ENCODE measurements at regions of chr5 and their contacts with region 1.

Region 1: DNA sequence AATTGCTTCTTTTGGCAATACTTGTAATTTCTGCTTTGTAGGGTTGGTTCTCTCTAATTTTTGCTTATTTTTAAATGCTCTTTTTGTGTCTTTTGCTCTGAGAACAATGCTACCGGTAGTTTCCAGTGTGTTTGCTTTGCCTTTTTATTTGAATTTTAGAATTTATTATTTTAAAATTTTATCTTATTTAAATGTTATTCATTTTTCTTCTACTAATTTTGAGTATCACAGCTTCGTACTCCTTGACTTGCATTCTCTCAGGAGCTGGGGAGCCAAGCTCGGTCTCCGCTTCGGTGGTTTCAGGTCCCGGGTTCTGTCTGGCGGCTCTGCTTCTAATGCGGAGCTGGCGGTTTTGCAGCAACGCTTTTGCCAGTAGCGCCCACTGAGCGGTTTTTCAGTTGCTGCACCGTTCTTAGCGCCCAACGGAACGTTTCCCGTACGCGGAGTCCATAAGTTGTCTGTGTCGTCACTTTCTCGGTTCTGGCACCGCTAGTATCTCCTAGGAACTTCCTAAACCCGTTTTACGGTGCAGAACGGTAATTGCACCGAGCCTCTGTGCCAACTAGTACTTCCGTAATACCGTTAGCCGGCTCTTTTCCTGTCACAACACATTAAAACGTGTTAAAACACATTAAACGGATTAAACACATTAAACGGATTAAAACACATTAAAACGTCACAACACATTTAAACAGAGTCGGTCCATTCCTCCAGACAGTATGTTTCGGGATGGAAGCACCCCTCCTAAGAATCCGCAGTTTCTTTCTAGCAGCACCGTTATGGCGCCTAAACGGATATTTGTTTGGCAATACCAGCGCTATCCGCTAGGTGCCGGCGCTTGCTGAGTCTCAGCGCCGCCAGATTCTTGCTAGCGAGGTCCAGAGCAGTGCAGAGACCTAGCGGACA is 45.6 kb downstream of the ANXA2R start:
- DNase-seq: peak; percentile 94
- H3K4me3 Mint-ChIP-seq: peak overlapping the region; percentile 99
- H3K27ac Mint-ChIP-seq: peak overlapping the region; percentile 100
- H3K4me1 Mint-ChIP-seq: peaks cover 17% of the 10 kb centered on the region
- H3K27me3 Mint-ChIP-seq: no peaks in the 10 kb centered on the region

Region 2: DNA sequence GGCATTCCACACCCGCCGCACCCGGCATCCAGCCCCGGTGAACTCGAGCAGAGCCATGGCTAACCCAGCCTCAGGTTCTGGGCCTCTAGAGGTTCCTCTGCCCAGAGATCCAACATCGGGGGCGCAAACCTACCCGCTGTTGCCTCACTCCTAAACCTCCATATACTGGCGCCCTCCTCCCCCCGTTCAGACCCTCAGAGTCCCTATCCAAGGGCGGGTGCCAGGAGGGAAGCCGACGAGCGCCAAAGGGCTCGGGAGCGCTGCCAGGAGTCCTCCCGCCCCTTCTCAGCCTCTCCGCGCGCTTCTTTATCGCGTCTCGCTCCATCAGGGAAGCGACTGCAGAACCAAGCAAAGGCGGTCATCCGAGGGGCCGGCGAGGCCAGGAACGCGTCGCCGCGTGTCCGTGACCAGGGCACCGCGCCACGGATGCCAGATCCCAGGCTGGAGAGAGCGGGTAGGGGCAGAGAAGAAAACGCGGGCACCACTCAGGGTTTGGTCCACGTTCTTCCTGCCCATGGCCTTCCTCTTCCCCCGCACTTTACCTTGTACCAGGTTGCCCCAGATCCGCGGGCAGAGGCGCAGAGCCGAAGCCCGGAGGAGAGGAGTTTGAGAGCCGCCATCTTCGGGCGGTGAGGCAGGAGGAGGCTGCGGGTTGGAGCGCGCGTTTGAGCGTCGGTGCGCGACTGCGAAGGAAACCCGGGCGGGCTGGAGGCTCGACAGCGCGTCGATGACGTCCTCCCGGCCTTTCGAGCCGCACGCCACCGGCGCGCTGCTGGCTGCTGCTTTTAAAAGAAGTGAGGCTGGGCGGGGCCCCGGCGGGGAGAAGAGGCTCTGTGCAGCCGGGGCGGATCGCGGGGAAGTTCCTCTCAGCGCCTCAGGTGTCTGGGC is 1124.5 kb before region 1 on chr5 and contains the start of gene OXCT1:
- CTCF ChIA-PET with region 1: no interaction called
- intact Hi-C with region 1: loop called (anchors 1 kb)
- DNase-seq: peak; percentile 93
- H3K4me3 Mint-ChIP-seq: peak within 1 kb of the TSS; percentile 92
- H3K27ac Mint-ChIP-seq: peak within 1 kb of the TSS; percentile 88
- H3K4me1 Mint-ChIP-seq: peaks cover 53% of the 10 kb centered on the region
- H3K27me3 Mint-ChIP-seq: no peaks in the 10 kb centered on the region
- total RNA-seq, gene OXCT1: 76.1 to 78.8 TPM

Region 3: DNA sequence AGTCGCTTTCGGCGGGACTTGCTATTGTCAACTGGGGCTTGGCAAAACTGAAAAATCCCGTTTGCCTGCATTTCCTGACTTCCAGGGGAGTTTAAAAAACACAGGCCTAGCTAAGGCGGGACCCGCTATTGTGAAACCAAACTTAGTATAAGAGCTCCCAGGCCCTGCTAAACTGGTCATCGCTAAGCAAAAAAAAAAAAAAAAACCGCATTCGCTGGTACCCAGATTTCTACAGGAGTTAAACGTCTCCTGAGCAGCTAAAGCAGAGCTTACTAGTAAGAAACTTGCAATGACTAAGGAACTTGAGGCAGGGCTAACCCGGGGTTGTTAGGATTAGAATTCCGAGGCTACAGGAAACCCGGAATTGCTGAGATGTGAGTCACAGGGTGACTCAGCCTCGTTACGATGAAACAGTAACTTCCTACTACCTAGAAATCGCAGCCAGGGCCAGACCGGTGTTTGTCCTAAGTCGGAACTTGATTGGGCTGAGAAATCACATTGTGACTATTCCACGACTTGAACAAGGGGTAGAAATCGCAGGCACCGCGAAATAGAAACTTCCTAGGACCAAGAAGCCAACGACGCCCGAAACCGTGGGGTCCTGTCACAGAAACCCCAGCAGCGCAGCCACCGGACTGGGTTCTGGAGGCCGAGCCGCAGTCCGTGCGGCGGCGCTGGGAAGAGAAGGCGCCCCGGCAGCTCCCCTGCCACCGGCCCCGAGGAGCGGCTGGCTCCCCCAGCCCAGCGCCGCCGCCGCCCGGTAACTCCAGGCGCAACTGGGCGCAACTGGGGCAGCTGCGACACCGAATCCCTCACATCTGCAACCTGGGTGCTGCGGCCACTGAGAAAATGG is 43.8 kb before region 1 on chr5:
- CTCF ChIA-PET with region 1: interaction called, 15 read pairs
- intact Hi-C with region 1: loop called (anchors 1 kb)
- DNase-seq: peak; percentile 83
- H3K4me3 Mint-ChIP-seq: peak overlapping the region; percentile 87
- H3K27ac Mint-ChIP-seq: peak overlapping the region; percentile 88
- H3K4me1 Mint-ChIP-seq: peaks cover 9% of the 10 kb centered on the region
- H3K27me3 Mint-ChIP-seq: no peaks in the 10 kb centered on the region

Region 4: DNA sequence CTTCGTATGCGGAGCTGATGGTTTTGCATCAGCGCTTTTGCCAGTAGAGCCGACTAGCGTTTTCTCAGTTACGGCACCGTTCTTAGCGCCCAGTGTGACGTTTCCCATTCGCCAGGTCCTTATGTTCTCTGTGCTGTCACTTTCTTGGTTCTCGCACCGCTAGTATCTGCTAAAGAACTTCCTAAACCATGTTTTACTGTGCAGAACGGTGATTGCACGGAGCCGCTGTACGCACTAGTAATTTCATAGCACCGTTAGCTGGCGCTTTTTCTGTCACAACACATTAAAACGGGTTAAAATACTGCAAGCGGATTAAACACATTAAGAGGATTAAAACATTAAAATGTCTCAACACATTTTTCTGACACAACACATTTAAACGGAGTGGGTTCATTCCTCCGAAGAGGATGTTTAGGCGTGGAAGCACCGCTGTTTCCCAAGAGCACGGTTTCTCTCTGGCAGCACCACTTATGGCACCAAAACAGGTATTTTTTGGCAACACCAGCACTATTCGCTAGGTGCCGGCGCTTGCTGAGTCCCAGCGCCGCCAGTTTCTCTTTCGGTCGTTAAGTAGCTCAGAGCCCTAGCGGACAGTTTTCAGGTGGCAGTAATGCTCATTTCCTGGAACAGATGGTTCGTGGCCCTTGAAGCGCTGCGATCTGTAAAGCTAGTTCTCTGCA is 25.3 kb after region 1 on chr5:
- CTCF ChIA-PET with region 1: interaction called, 144 read pairs
- intact Hi-C with region 1: loop called (anchors 1 kb)
- DNase-seq: peak; percentile 90
- H3K4me3 Mint-ChIP-seq: peak overlapping the region; percentile 97
- H3K27ac Mint-ChIP-seq: peak overlapping the region; percentile 99
- H3K4me1 Mint-ChIP-seq: peaks cover 37% of the 10 kb centered on the region
- H3K27me3 Mint-ChIP-seq: no peaks in the 10 kb centered on the region

Region 5: GRCh38 chr5:43066799-43067741 is 72.6 kb after region 1 on chr5:
- CTCF ChIA-PET with region 1: interaction called, 6 read pairs
- intact Hi-C with region 1: loop called (anchors 1 kb)
- DNase-seq: peak; percentile 92
- H3K4me3 Mint-ChIP-seq: peak overlapping the region; percentile 98
- H3K27ac Mint-ChIP-seq: peak overlapping the region; percentile 98
- H3K4me1 Mint-ChIP-seq: peaks cover 36% of the 10 kb centered on the region
- H3K27me3 Mint-ChIP-seq: no peaks in the 10 kb centered on the region

Region 6: GRCh38 chr5:43110606-43111442 is 116.3 kb after region 1 on chr5:
- CTCF ChIA-PET with region 1: interaction called, 3 read pairs
- intact Hi-C with region 1: loop called (anchors 1 kb)
- DNase-seq: peak; percentile 81
- H3K4me3 Mint-ChIP-seq: no peak overlapping the region
- H3K27ac Mint-ChIP-seq: peak overlapping the region; percentile 71
- H3K4me1 Mint-ChIP-seq: peaks cover 43% of the 10 kb centered on the region
- H3K27me3 Mint-ChIP-seq: no peaks in the 10 kb centered on the region

Region 7: DNA sequence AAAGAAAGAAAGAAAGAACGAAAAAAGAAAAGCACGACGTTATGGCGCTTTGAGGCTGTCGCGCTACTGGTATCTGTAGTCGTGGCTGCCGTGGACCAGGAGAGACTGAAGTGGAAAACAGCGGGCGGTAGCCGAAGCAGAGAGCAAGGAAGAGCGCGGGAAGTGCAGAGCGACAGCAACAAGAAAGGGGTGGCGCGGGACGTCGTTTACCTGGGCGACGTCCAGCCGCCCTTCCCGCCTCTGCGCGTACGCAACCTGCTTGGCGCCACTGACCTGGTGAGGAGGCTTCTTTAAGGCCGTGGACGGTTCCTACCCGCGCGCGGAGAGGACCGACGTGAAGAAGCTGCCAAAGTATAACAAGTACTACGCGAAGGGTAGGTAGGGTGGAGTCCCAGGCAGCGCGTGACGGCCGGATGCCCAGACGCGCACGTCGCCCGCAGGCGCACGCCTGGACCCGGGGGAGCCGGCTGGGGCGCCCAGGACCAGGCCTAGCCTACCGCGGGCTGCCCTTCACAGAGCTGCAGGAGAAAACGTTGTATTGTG is 402.3 kb after region 1 on chr5:
- CTCF ChIA-PET with region 1: no interaction called
- intact Hi-C with region 1: loop called (anchors 2 kb)
- DNase-seq: peak; percentile 75
- H3K4me3 Mint-ChIP-seq: peak overlapping the region; percentile 88
- H3K27ac Mint-ChIP-seq: peak overlapping the region; percentile 87
- H3K4me1 Mint-ChIP-seq: peaks cover 32% of the 10 kb centered on the region
- H3K27me3 Mint-ChIP-seq: no peaks in the 10 kb centered on the region